ENCODE measurements at regions of chr20 and their contacts with region 1.

Region 1: DNA sequence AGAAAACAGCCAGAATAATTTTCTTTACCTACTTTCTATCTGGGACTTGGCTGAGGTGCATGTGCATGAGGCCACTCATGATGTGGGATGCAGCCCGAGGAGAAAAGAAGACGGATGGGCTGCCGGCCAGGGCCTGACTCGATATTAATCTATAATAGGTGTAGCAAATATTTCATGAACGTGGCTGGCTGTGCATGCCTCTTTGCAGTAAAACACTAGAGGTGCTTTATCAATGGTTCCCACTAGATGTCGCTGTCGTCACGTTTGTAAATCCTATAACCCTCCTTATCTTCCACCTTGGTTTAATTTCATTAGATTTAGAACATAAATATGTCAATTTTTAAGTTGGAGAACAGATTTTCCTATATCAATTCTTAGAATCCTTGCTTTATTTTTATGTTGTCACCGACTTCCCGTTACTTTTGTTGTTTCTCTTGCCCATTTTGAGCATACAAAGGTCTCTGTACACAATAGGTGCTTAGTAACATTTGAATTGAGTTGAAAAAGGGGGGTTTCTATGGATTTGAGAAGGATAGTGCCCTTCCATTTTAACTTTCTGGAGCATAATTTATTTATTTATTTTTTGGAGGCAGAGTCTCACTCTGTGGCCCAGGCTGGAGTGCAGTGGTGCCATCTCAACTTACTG is 19.6 kb upstream of the FERMT1 start:
- DNase-seq: no peak
- H3K4me3 Mint-ChIP-seq: no peak overlapping the region
- H3K27ac Mint-ChIP-seq: no peak overlapping the region
- H3K4me1 Mint-ChIP-seq: no peaks in the 10 kb centered on the region
- H3K27me3 Mint-ChIP-seq: no peaks in the 10 kb centered on the region

Region 2: DNA sequence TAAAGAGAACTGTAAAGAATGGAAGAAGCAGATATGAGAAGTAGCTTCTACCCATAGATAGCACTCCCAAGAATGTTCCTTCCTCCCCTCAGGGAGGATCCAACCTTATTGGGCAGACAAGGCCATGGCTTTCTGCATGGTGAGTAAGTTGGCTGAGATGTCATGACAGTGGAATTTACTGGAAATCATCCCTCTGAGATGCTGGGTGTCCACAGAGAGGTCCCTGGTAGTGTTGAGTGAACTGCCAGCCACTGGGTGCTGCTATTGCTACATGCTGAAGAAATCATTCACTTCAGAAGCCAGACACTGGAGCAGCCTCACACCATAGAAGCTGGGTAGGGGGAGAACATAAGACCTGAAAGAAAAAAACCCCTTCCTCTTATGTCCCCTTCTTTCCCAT is 26.8 kb after region 1 on chr20:
- intact Hi-C with region 1: no loop called
- DNase-seq: no peak
- H3K4me3 Mint-ChIP-seq: no peak overlapping the region
- H3K27ac Mint-ChIP-seq: no peak overlapping the region
- H3K4me1 Mint-ChIP-seq: no peaks in the 10 kb centered on the region
- H3K27me3 Mint-ChIP-seq: no peaks in the 10 kb centered on the region

Region 3: GRCh38 chr20:6395695-6396094 is 253.2 kb after region 1 on chr20:
- intact Hi-C with region 1: no loop called
- DNase-seq: no peak
- H3K4me3 Mint-ChIP-seq: no peak overlapping the region
- H3K27ac Mint-ChIP-seq: no peak overlapping the region
- H3K4me1 Mint-ChIP-seq: no peaks in the 10 kb centered on the region
- H3K27me3 Mint-ChIP-seq: no peaks in the 10 kb centered on the region

Region 4: DNA sequence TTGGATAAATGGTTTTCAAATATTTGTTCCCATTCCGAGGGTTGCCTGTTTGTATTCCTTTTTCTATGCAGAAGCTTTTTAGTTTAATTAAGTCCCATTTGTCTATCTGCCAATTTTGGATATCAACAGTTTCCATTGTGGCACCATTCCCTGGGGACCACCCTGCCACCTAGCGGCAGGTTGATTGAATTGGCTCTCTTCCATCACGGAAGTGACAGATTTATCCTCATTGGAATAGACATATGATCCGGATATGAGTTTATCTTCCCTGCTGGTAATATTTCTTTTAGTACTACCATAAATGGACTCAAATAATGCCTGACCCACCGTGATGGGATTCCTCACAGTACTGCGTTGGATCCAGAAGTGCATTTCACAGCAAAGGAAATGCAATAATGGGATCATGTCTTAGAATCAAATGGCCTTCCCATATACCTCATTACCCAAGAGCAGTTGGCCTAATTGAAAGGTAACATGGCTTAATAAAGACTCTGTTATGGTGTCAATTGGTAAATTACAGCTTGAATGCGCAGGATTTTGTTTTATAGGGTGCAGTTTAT is 952.0 kb after region 1 on chr20:
- intact Hi-C with region 1: loop called (anchors 5 kb)
- DNase-seq: no peak
- H3K4me3 Mint-ChIP-seq: no peak overlapping the region
- H3K27ac Mint-ChIP-seq: no peak overlapping the region
- H3K4me1 Mint-ChIP-seq: no peaks in the 10 kb centered on the region
- H3K27me3 Mint-ChIP-seq: no peaks in the 10 kb centered on the region

Region 5: DNA sequence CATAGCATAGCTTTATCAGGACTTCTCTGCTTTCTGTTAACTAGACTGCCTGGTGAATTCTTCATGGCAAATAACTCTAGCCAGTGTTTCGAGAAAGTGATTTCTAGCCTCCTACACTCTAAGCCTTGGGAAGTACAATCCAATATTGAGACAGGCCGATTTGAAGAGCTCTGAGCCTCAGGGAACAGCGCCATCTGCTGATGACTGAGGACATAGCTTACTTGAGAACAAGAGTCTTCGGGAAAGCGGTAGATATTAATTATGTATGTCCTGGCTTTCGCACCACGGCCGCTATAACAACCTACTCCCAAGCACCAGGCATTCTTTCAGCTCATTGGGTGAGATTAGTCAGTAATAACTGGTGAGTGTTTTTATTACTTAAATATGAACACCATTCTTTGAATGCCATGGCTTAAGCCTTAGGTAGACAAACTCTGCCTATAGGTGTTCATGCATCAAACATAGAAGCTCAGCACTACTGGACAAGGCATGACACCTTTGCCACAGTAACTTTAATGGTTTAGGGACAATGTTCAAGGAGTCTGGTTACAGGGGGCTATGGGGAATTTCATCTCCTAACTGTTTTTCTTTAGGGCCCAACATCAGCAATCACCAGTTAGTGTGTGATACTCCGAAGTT is 1143.6 kb after region 1 on chr20:
- intact Hi-C with region 1: loop called (anchors 5 kb)
- DNase-seq: peak; percentile 4
- H3K4me3 Mint-ChIP-seq: no peak overlapping the region
- H3K27ac Mint-ChIP-seq: no peak overlapping the region
- H3K4me1 Mint-ChIP-seq: no peaks in the 10 kb centered on the region
- H3K27me3 Mint-ChIP-seq: no peaks in the 10 kb centered on the region

Region 6: GRCh38 chr20:7859356-7859802 is 1716.9 kb after region 1 on chr20:
- intact Hi-C with region 1: loop called (anchors 5 kb)
- DNase-seq: no peak
- H3K4me3 Mint-ChIP-seq: no peak overlapping the region
- H3K27ac Mint-ChIP-seq: no peak overlapping the region
- H3K4me1 Mint-ChIP-seq: no peaks in the 10 kb centered on the region
- H3K27me3 Mint-ChIP-seq: peaks cover 3% of the 10 kb centered on the region